Panc1 (cell line): ENCODE measurements at regions of chr9 and their contacts with region 1.

Region 1: DNA sequence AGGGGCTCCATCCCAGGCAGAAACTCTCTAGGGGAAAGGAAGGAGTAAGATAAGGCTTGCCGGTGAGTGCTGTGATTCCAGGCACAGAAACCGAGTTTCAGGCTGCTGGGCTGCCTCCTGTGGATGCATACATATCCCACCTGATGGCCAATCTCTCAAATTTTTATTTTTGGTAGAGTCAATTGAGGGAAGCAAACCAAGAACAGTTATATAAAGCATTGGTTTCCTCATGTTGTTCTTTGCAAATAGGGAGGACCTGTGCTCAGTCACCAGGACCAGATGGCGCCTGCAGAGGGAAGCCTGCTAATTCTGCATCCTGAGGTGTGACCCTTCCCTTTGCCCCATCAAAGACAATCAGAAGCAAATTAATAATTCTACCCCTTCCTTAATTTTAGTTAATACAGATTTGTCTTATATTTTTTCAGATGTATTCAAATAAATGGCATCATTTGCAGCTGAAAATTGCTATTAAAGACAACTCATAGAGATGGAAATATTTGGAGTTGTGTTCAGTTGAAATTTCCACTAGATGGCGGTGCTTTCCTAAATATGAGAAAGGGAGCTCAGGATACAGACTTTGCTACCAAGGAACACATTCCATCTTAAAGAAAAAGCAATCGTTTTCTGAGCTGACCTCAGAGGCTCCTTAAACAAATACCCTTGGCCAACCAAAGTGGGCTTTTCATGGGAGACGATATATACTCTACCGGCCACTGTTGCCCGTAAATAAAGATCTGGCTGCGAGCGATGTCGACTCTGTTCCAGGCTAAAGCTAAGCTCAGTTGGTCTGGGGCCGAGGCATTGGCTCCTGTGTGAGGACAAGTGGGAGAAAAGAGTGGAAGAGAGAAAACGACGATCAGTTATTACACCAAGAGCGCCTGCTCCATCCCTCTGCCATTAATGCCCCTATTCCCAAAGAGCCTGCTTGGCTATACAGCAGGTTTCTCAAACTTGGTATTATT is 225.7 kb upstream of the KLF9 start:
- DNase-seq: peak; percentile 18
- ATAC-seq: peak; percentile 71; the same call in 1 of the 2 replicates
- H3K4me3 ChIP-seq: no peak overlapping the region
- H3K27ac ChIP-seq: no peak overlapping the region
- H3K4me1 ChIP-seq: no peaks in the 10 kb centered on the region
- H3K27me3 ChIP-seq: no peaks in the 10 kb centered on the region
- CTCF ChIP-seq: peak; percentile 63

Region 2: DNA sequence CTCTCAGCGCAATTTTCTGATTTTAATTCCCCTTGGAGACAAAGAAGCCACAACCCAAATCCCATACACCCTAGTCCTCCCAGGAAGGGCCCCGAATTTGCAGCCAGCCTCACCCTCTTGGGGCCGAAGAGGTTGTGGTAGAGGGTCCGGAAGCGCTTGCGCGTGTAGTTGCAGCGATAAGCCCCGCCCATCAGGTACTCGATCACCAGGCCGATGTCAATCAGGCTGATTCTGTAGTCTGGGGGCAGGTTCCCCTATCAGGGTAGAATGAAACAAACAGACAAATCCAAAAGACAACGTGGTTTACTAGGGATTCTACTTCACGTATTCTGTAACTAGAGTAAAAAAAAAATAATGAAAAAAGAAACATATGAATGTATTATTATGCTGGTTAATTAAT is 15.1 kb before region 1 on chr9:
- CTCF ChIA-PET with region 1: interaction called, 16 read pairs
- POLR2A ChIA-PET with region 1: no interaction called
- in situ Hi-C with region 1: no loop called
- intact Hi-C with region 1: no loop called
- DNase-seq: no peak
- ATAC-seq: no peak
- H3K4me3 ChIP-seq: no peak overlapping the region
- H3K27ac ChIP-seq: no peak overlapping the region
- H3K4me1 ChIP-seq: no peaks in the 10 kb centered on the region
- H3K27me3 ChIP-seq: no peaks in the 10 kb centered on the region
- CTCF ChIP-seq: no peak

Region 3: GRCh38 chr9:70924895-70925547 is 284.9 kb after region 1 on chr9:
- CTCF ChIA-PET with region 1: interaction called, 4 read pairs
- POLR2A ChIA-PET with region 1: no interaction called
- in situ Hi-C with region 1: no loop called
- intact Hi-C with region 1: loop called (anchors 5 kb)
- DNase-seq: peak; percentile 10
- ATAC-seq: peak; percentile 86
- H3K4me3 ChIP-seq: no peak overlapping the region
- H3K27ac ChIP-seq: no peak overlapping the region
- H3K4me1 ChIP-seq: no peaks in the 10 kb centered on the region
- H3K27me3 ChIP-seq: no peaks in the 10 kb centered on the region
- CTCF ChIP-seq: peak; percentile 66

Region 4: GRCh38 chr9:71249729-71250317 is 609.7 kb after region 1 on chr9:
- CTCF ChIA-PET with region 1: interaction called, 7 read pairs
- POLR2A ChIA-PET with region 1: no interaction called
- in situ Hi-C with region 1: no loop called
- intact Hi-C with region 1: loop called (anchors 2 kb)
- DNase-seq: peak; percentile 27
- ATAC-seq: peak; percentile 83
- H3K4me3 ChIP-seq: no peak overlapping the region
- H3K27ac ChIP-seq: no peak overlapping the region
- H3K4me1 ChIP-seq: no peaks in the 10 kb centered on the region
- H3K27me3 ChIP-seq: no peaks in the 10 kb centered on the region
- CTCF ChIP-seq: peak; percentile 70; the same call in 1 of the 2 replicates